ENCODE measurements at regions of chr10 and their contacts with region 1.

Region 1: DNA sequence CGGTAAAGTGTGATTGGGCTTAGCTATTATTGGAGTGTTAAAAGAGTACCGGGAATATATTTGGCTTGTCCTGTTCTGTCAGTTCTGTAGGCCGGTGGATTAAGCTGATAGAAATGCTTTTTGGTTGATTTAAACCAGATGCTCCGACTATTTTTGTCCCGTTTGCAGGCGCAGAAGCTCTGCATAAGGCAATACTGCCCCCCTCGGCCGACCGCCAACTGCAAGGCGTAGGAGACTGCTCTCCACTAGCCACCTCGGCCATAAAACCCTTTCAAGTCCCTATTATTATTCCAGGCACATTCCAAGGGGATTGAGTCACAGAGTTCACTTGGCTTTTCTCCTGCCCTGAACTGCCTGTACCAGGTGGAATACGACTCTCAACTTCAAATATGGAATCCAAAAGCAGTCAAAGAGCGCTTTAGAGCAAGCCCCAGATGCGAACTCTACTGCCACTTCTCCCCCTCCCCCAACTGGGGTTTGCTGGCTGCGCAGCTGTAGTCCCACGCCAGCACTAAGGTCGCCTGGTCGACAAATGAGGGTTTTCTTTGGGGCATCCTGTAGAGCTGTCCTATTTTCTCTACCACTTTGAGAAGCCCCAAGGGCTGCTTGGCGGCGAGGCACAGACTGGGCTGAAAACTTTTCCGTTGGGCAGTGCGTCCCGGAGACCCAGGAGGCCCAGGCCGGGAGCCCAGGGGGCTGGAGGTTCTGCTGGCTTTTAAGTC is 108.3 kb downstream of the REEP3 start:
- DNase-seq: peak; percentile 52 to 85 (median 80)
- ATAC-seq: peak; percentile 62
- H3K4me3 ChIP-seq: peak overlapping the region; percentile 71 to 81
- H3K4me3 Mint-ChIP-seq: peak overlapping the region; percentile 97
- H3K27ac ChIP-seq: peak overlapping the region; percentile 31 to 45
- H3K27ac Mint-ChIP-seq: peak overlapping the region; percentile 91
- H3K4me1 ChIP-seq: peaks cover 20% of the 10 kb centered on the region
- H3K4me1 Mint-ChIP-seq: peaks cover 29% of the 10 kb centered on the region
- H3K27me3 ChIP-seq: no peaks in the 10 kb centered on the region
- H3K27me3 Mint-ChIP-seq: no peaks in the 10 kb centered on the region
- CTCF ChIP-seq: peak; percentile 87

Region 2: GRCh38 chr10:63106111-63106755 is 523.3 kb before region 1 on chr10:
- CTCF ChIA-PET with region 1: no interaction called
- POLR2A ChIA-PET with region 1: no interaction called
- intact Hi-C with region 1: no loop called
- DNase-seq: no peak
- ATAC-seq: no peak
- H3K4me3 ChIP-seq: no peak overlapping the region
- H3K4me3 Mint-ChIP-seq: no peak overlapping the region
- H3K27ac ChIP-seq: no peak overlapping the region
- H3K27ac Mint-ChIP-seq: no peak overlapping the region
- H3K4me1 ChIP-seq: no peaks in the 10 kb centered on the region
- H3K4me1 Mint-ChIP-seq: no peaks in the 10 kb centered on the region
- H3K27me3 ChIP-seq: peaks cover 0 to 5% of the 10 kb centered on the region in 2 experiments
- H3K27me3 Mint-ChIP-seq: peaks cover 35% of the 10 kb centered on the region
- CTCF ChIP-seq: no peak

Region 3: DNA sequence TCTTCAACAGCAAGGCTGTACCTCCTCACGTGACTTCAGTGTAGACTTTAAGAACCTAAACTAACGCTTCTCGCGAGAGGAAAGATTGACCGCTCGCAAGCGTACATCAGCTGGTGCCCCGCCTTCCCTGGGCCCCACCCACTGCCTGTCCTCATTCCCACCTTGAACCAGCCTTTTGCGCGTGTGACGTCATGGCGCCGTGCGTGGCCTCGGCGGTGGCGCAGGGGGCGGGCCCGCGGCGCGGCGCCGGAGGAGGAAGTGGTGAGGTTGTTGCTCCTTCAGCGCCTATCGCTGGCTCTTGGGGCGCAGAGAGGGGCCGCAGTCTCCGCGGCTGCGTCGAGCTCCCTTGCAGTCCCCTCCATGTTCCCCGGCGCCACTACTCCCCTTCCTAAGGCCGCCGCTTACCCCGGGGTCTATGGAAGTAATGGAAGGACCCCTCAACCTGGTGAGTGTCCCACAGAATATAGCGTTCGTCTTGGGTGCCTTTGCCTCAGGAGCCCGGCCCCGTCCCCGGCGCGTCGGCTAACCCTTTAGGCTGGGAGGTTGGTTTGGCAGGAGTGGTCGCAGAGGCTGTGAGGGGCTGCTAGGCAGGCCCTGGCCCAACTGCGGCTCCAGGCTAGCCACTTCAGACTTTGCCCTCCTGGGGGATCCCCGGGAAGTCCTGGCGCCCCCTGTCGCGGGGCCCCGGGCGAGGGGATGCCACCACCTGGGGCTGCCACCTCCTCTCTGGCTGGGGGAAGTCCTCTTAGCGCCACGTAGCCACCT is 496.3 kb before region 1 on chr10 and contains the start of gene NRBF2:
- CTCF ChIA-PET with region 1: interaction called, 8 read pairs
- POLR2A ChIA-PET with region 1: no interaction called
- intact Hi-C with region 1: loop called in 1 of 2 experiments (anchors 1 kb)
- DNase-seq: peak; percentile 94 to 99 (median 97)
- ATAC-seq: peak; percentile 91
- H3K4me3 ChIP-seq: peak within 1 kb of the TSS; percentile 96 to 97
- H3K4me3 Mint-ChIP-seq: peak within 1 kb of the TSS; percentile 91
- H3K27ac ChIP-seq: peak within 1 kb of the TSS; percentile 96 to 98
- H3K27ac Mint-ChIP-seq: peak within 1 kb of the TSS; percentile 97
- H3K4me1 ChIP-seq: peaks cover 41% of the 10 kb centered on the region
- H3K4me1 Mint-ChIP-seq: peaks cover 37% of the 10 kb centered on the region
- H3K27me3 ChIP-seq: no peaks in the 10 kb centered on the region
- H3K27me3 Mint-ChIP-seq: peaks cover 5% of the 10 kb centered on the region
- CTCF ChIP-seq: peak; percentile 22
- total RNA-seq, gene NRBF2: 26.6 to 29.1 TPM

Region 4: DNA sequence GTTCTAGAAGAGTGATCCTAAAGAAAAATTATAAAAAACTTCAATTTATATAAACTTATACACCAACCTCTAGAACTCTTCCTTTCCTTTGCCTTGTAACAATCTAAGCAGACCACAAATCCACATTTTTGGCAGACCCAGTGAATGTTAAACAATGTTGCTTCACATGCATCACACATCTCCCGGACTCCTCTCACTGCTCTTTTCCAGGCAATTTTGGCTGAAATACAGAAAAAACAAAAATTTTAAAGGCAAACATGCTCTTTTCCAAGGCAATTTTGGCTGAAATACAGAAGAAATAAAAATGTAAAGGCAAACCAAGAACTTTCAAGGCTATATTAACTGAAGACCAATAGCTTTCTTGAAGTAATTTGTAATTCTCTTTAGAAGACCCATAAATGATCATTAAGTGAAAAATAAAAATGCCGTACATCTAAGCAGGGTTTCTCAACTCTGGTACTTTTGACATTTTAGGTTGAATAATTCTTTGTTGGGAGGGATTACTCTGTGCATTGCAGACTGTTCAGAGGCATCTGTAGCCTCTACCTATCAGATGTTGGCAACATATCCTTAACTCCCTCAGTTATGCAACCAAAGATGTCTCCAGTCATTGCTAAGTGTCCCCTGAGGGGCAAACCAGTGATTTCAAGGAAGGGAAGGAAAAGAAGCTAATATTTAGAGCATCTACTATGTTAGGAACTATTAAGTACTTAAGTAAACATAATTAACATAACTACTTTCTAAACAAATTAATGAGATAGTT is 432.0 kb before region 1 on chr10:
- CTCF ChIA-PET with region 1: interaction called, 11 read pairs
- POLR2A ChIA-PET with region 1: no interaction called
- intact Hi-C with region 1: no loop called
- DNase-seq: no peak
- ATAC-seq: no peak
- H3K4me3 ChIP-seq: no peak overlapping the region
- H3K4me3 Mint-ChIP-seq: no peak overlapping the region
- H3K27ac ChIP-seq: no peak overlapping the region
- H3K27ac Mint-ChIP-seq: no peak overlapping the region
- H3K4me1 ChIP-seq: no peaks in the 10 kb centered on the region
- H3K4me1 Mint-ChIP-seq: peaks cover 2% of the 10 kb centered on the region
- H3K27me3 ChIP-seq: no peaks in the 10 kb centered on the region
- H3K27me3 Mint-ChIP-seq: no peaks in the 10 kb centered on the region
- CTCF ChIP-seq: no peak

Region 5: GRCh38 chr10:63227207-63227915 is 402.2 kb before region 1 on chr10:
- CTCF ChIA-PET with region 1: interaction called, 16 read pairs
- POLR2A ChIA-PET with region 1: no interaction called
- intact Hi-C with region 1: no loop called
- DNase-seq: peak in 2 of 9 experiments; percentile 30 to 59
- ATAC-seq: peak; percentile 36
- H3K4me3 ChIP-seq: no peak overlapping the region
- H3K4me3 Mint-ChIP-seq: peak overlapping the region; percentile 61
- H3K27ac ChIP-seq: peak overlapping the region in 1 of 2 experiments; percentile 49
- H3K27ac Mint-ChIP-seq: peak overlapping the region; percentile 88
- H3K4me1 ChIP-seq: peaks cover 42% of the 10 kb centered on the region
- H3K4me1 Mint-ChIP-seq: peaks cover 72% of the 10 kb centered on the region
- H3K27me3 ChIP-seq: no peaks in the 10 kb centered on the region
- H3K27me3 Mint-ChIP-seq: no peaks in the 10 kb centered on the region
- CTCF ChIP-seq: no peak

Region 6: GRCh38 chr10:63521416-63522276 is 107.9 kb before region 1 on chr10:
- CTCF ChIA-PET with region 1: interaction called, 3 read pairs
- POLR2A ChIA-PET with region 1: interaction called, 15 read pairs
- intact Hi-C with region 1: loop called (anchors 1 to 5 kb)
- DNase-seq: peak; percentile 15 to 85 (median 55)
- ATAC-seq: peak; percentile 72
- H3K4me3 ChIP-seq: peak overlapping the region; percentile 61 to 81
- H3K4me3 Mint-ChIP-seq: peak overlapping the region; percentile 82
- H3K27ac ChIP-seq: peak overlapping the region; percentile 63 to 79
- H3K27ac Mint-ChIP-seq: peak overlapping the region; percentile 88
- H3K4me1 ChIP-seq: peaks cover 29% of the 10 kb centered on the region
- H3K4me1 Mint-ChIP-seq: peaks cover 67% of the 10 kb centered on the region
- H3K27me3 ChIP-seq: no peaks in the 10 kb centered on the region
- H3K27me3 Mint-ChIP-seq: no peaks in the 10 kb centered on the region
- CTCF ChIP-seq: no peak

Region 7: GRCh38 chr10:63720072-63720537 is 90.6 kb after region 1 on chr10:
- CTCF ChIA-PET with region 1: interaction called, 47 read pairs
- POLR2A ChIA-PET with region 1: interaction called, 3 read pairs
- intact Hi-C with region 1: loop called (anchors 1 to 5 kb)
- DNase-seq: peak; percentile 4 to 73 (median 46)
- ATAC-seq: peak; percentile 87
- H3K4me3 ChIP-seq: no peak overlapping the region
- H3K4me3 Mint-ChIP-seq: no peak overlapping the region
- H3K27ac ChIP-seq: no peak overlapping the region
- H3K27ac Mint-ChIP-seq: no peak overlapping the region
- H3K4me1 ChIP-seq: no peaks in the 10 kb centered on the region
- H3K4me1 Mint-ChIP-seq: peaks cover 4% of the 10 kb centered on the region
- H3K27me3 ChIP-seq: peaks cover 0 to 6% of the 10 kb centered on the region in 2 experiments
- H3K27me3 Mint-ChIP-seq: peaks cover 15% of the 10 kb centered on the region
- CTCF ChIP-seq: peak; percentile 100

Measured in CD8-positive, alpha-beta T cell (primary cell).